Right cardiac atrium (tissue), 5 donors: ENCODE measurements at regions of chr1 and their contacts with region 1.

Region 1: DNA sequence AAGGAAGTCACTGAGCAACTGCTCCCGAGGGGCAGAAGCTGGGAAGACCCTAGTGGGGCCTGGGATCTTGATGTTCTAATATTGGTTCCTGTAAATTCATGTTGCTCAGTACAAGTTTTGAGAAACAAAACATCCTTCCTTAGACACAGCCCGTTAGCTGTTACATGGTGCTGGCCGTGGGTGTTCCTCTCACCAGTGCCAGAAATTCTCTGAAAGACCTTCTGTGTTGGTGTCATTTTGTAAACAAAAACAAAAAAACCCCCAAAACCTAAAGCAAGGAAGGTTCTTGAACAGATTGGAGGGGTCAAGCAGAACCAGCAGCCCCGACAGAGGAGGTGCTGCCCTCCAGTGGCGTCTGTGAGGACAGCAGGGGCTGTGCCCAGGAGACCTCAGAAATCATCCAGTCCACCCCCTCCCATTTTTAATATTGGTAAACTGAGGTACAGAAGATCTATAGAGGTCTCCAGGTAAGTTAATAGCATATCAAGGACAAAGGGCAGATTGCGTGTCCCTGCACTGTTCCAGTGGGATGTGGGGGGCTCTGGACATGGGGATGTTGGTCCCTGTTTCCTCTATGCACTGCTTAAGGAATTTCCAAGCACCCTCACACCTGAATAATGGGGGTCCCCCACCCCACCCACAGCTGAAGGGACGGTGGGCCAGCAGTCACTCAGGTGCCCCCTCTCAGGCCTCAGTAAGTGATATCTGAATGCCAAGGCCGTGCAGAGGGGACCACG is 38.2 kb downstream of the SLC2A7 start:
- DNase-seq: peak; percentile 47 to 83 (median 82)
- ATAC-seq: peak; percentile 66 to 72
- H3K4me3 ChIP-seq: no peak overlapping the region
- H3K27ac ChIP-seq: no peak overlapping the region
- H3K4me1 ChIP-seq: no peaks in the 10 kb centered on the region
- H3K27me3 ChIP-seq: no peaks in the 10 kb centered on the region

Region 2: DNA sequence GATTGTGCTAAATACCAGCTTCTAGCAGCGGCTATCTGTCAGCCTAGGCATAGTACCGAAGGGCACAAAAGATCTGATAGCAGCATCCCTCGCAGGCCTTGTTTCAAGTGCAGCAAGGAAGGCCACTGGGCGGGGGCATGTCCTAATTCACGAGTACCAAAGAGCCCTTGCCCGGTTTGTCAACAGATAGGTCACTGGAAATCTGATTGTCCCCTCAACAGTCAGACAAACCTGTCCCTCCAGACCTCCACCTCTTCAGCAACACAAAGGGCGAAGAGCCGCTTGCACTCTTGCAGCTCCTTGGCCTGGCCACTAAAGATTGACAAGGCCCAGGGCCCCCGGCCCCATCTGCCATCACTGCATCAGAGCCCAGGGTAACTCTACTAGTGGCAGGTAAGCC is 65.1 kb before region 1 on chr1:
- intact Hi-C with region 1: loop called (anchors 2 to 5 kb)
- DNase-seq: no peak
- ATAC-seq: no peak
- H3K4me3 ChIP-seq: no peak overlapping the region
- H3K27ac ChIP-seq: no peak overlapping the region
- H3K4me1 ChIP-seq: no peaks in the 10 kb centered on the region
- H3K27me3 ChIP-seq: no peaks in the 10 kb centered on the region